K562 (cell line): ENCODE measurements at regions of chr19 and their contacts with region 1.

Region 1: DNA sequence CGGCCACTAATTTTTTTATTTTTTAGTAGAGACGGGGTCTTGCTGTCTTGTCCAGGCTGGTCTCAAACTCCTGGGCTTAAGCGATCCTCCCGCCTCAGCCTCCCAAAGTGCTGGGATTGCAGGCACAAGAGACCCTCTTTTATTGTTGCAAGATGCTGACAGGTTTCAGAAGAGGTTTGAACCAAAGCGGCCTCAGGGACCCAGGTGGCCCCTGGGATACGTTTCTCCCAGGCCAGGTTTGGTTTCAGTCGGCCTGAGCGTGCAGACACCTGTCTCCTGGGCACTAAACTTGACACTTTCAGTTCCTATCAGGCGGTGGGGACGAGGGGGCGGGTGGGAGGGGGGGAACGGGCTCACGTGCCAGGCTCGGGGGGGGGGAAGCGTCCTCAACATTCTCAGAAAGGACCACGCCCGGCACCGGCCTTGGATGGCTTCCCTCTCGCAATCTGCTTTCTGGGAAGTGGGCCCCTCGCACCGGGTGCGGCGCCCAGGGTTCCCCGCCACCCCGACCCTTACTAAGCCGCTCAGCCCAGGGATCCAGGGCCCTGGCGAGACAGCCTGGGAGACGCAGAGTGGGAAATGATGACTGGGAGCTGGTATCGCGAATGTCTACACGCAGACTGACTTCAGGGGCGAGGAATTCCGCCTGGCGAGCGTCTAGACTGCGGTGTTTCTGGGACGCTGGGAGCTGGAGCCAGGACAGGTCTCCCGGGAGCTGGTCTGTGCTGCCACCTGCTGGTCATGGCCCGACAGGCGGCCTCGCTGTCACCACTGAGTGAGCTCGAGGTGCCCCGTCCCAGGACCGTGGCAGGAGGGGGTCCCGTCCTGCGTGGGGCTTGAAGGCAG is 91.6 kb downstream of the GNG7 start:
- DNase-seq: peak; percentile 83 to 87 (median 87)
- ATAC-seq: peak; percentile 97
- H3K4me3 ChIP-seq: peak overlapping the region; percentile 41
- H3K27ac ChIP-seq: no peak overlapping the region
- H3K4me1 ChIP-seq: peaks cover 0 to 25% of the 10 kb centered on the region in 2 experiments; a peak in 2 of 5 replicates
- H3K27me3 ChIP-seq: peaks cover 18 to 49% of the 10 kb centered on the region in 2 experiments; a peak in 4 of 5 replicates
- CTCF ChIP-seq: peak; percentile 87 to 93 (median 91)
- EP300 ChIP-seq: no peak
- POLR2A ChIP-seq: no peak
- RAD21 ChIP-seq: peak; percentile 92 to 96

Region 2: DNA sequence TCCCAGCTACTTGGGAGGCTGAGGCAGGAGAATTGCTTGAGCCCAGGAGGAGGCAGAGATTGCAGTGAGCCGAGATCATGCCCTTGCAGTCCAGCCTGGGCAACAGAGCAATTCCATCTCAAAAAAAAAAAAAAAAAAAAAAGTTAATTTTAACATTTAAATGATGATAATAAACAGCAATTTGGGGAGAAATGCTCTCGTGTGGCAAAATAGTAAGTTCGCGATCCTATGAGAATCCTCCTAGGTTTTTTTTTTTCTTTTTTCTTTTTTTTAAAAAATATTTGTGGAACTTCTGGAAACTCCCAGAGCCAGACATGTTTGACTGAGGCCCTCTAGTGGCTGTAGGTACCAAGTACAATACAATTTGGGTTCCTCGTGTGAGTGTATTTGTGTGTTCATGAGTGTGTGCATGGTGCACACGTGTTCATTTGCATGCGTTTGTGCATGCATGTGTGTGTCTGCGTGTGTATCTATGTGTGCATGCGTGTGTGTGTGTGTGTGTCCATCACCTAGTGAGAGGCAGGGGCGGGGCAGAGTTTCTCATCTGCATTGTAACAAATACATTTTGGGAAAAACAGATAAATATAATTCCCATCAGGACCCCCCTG is 219.6 kb before region 1 on chr19:
- CTCF ChIA-PET with region 1: no interaction called
- POLR2A ChIA-PET with region 1: no interaction called
- in situ Hi-C with region 1: no loop called
- intact Hi-C with region 1: loop called (anchors 10 kb)
- DNase-seq: peak; percentile 55 to 71 (median 61)
- ATAC-seq: peak; percentile 59
- H3K4me3 ChIP-seq: no peak overlapping the region
- H3K27ac ChIP-seq: no peak overlapping the region; the same call in 2 of the 3 replicates
- H3K4me1 ChIP-seq: peaks cover 6 to 19% of the 10 kb centered on the region in 2 experiments; a peak in 4 of 5 replicates
- H3K27me3 ChIP-seq: no peaks in the 10 kb centered on the region
- CTCF ChIP-seq: peak; percentile 69 to 89 (median 78)
- EP300 ChIP-seq: 0 out of 2 replicates have a peak, but pooled peaks have one; percentile 11
- POLR2A ChIP-seq: no peak
- RAD21 ChIP-seq: peak; percentile 78 to 85

Region 3: GRCh38 chr19:2578901-2579677 is 31.8 kb before region 1 on chr19:
- CTCF ChIA-PET with region 1: interaction called, 10 read pairs
- POLR2A ChIA-PET with region 1: interaction called, 3 read pairs
- in situ Hi-C with region 1: no loop called
- intact Hi-C with region 1: no loop called
- DNase-seq: peak; percentile 67 to 75 (median 71)
- ATAC-seq: peak; percentile 96
- H3K4me3 ChIP-seq: no peak overlapping the region
- H3K27ac ChIP-seq: no peak overlapping the region
- H3K4me1 ChIP-seq: peaks cover 0 to 24% of the 10 kb centered on the region in 2 experiments; a peak in 2 of 5 replicates
- H3K27me3 ChIP-seq: peaks cover 0 to 34% of the 10 kb centered on the region in 2 experiments; a peak in 3 of 5 replicates
- CTCF ChIP-seq: peak; percentile 86 to 89 (median 87)
- EP300 ChIP-seq: no peak
- POLR2A ChIP-seq: no peak
- RAD21 ChIP-seq: peak; percentile 96 to 98